ENCODE measurements at regions of chr6 and their contacts with region 1.

Region 1: GRCh38 chr6:74075323-74075722 is 379.3 kb downstream of the CD109 start:
- DNase-seq: no peak
- H3K4me3 ChIP-seq: no peak overlapping the region
- H3K27ac ChIP-seq: no peak overlapping the region
- H3K4me1 ChIP-seq: no peaks in the 10 kb centered on the region
- H3K27me3 ChIP-seq: no peaks in the 10 kb centered on the region
- CTCF ChIP-seq: no peak
- POLR2A ChIP-seq: no peak

Region 2: DNA sequence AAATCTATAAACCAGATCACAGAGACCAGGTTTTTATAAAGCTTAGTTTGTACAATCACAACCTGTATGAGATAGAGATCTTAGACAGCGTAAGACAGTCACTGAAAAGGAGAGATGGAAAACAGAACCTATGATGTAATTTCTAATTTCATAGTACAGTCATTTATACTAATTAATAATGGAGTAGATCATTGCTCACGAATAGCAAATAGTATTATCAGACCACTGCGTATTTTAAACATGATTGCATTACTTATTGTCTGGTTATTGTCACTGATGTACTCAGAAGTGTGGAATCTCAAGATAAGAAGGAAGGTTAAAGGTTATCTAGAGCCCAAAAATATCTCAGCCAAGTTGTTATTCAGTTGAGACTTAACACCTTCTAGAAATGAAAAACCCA is 965.7 kb before region 1 on chr6:
- intact Hi-C with region 1: no loop called
- DNase-seq: no peak
- H3K4me3 ChIP-seq: no peak overlapping the region
- H3K27ac ChIP-seq: no peak overlapping the region
- H3K4me1 ChIP-seq: no peaks in the 10 kb centered on the region
- H3K27me3 ChIP-seq: no peaks in the 10 kb centered on the region
- CTCF ChIP-seq: no peak
- POLR2A ChIP-seq: no peak

Region 3: DNA sequence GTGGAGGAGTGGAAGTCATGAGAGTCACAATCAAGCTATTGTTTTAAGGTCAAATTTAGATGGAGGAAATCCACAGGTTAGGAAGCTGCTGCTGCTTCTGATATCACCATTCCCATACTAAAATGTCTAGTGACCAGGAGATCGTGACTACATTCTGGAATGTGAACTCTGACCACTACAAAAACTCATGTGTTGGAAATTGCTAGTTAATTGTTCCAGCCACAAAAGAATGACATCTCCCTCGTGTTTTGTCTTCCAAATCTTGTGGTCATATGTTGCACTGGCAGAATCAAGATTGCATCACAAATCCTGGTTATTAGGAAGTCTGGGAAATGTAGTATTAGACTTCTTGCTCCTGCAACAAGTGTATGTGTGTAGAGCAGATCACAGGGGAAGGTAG is 62.6 kb after region 1 on chr6:
- intact Hi-C with region 1: loop called (anchors 2 kb)
- DNase-seq: no peak
- H3K4me3 ChIP-seq: no peak overlapping the region
- H3K27ac ChIP-seq: no peak overlapping the region
- H3K4me1 ChIP-seq: no peaks in the 10 kb centered on the region
- H3K27me3 ChIP-seq: no peaks in the 10 kb centered on the region
- CTCF ChIP-seq: no peak
- POLR2A ChIP-seq: no peak